ENCODE measurements at regions of chr7 and their contacts with region 1.

Region 1: GRCh38 chr7:27921081-27921836 is 181.3 kb downstream of the TAX1BP1 start:
- DNase-seq: peak; percentile 71
- ATAC-seq: peak; percentile 84
- H3K4me3 ChIP-seq: no peak overlapping the region
- H3K27ac ChIP-seq: no peak overlapping the region
- H3K4me1 ChIP-seq: peaks cover 6 to 34% of the 10 kb centered on the region in 2 experiments; a peak in 2 of 4 replicates
- H3K27me3 ChIP-seq: no peaks in the 10 kb centered on the region
- CTCF ChIP-seq: peak; percentile 46 to 76 (median 69); a peak in 4 of 6 replicates
- POLR2A ChIP-seq: no peak
- RAD21 ChIP-seq: peak; percentile 88

Region 2: GRCh38 chr7:26675143-26675887 is 1245.9 kb before region 1 on chr7:
- CTCF ChIA-PET with region 1: no interaction called
- POLR2A ChIA-PET with region 1: no interaction called
- RAD21 ChIA-PET with region 1: no interaction called
- intact Hi-C with region 1: loop called (anchors 10 kb)
- DNase-seq: no peak
- ATAC-seq: peak; percentile 67
- H3K4me3 ChIP-seq: no peak overlapping the region
- H3K27ac ChIP-seq: no peak overlapping the region
- H3K4me1 ChIP-seq: peaks cover 0 to 7% of the 10 kb centered on the region in 2 experiments; a peak in 1 of 4 replicates
- H3K27me3 ChIP-seq: no peaks in the 10 kb centered on the region
- CTCF ChIP-seq: no peak
- POLR2A ChIP-seq: no peak
- RAD21 ChIP-seq: no peak

Region 3: DNA sequence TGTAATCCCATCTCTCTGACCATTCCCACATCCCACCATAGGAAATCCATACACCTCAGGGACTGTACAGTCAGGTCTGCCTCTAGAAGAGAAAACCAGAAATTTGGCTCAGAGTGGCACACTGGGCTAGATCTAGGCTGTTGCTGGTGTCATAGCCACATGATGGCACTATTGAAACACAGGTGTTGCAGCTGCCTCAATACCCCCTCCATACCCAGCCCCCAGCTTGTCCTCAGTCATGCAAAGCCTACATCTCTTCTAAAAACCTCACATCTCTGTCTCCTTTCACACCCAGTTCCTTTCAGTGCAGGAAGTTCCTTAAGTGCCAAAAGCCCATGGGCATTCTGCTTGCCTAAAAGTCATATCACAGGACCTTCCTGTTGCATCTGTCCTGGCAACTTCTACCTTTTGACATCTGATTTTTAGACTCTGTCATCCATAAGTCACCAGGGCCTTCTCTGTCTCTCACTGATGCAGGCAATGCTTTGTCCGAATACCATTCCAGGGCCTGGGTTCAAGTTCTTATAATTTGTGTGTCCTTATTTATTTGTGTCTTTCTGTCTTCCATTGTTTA is 231.6 kb before region 1 on chr7:
- CTCF ChIA-PET with region 1: interaction called, 6 read pairs
- POLR2A ChIA-PET with region 1: no interaction called
- RAD21 ChIA-PET with region 1: no interaction called
- intact Hi-C with region 1: loop called (anchors 1 kb)
- DNase-seq: no peak
- ATAC-seq: peak; percentile 95
- H3K4me3 ChIP-seq: no peak overlapping the region
- H3K27ac ChIP-seq: no peak overlapping the region
- H3K4me1 ChIP-seq: peaks cover 0 to 13% of the 10 kb centered on the region in 2 experiments; a peak in 2 of 4 replicates
- H3K27me3 ChIP-seq: no peaks in the 10 kb centered on the region
- CTCF ChIP-seq: peak; percentile 53 to 69 (median 66)
- POLR2A ChIP-seq: no peak
- RAD21 ChIP-seq: peak; percentile 85

Region 4: DNA sequence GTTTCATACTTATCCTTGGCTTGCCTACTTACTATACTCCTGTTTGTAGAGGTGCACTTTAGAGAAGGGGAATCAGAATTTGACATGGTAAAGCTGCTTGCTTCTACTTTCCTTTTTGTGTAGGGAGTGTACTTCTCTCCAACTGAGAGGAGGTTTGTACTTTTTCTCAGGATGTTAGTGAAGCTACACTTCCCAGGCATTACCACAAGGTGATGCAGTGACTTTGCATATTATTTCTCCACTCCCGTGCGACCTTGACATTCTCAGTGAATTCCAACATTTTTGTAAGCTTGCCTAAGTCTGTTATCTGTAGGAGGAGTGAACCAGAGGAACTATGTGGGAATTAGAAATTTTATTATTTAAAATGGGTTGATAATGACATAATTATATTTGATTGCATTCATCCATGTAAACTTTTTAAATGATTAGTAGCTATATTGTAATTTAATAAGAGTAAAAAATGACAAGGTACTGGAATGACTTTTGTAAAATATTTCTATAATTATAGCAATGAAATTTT is 176.1 kb before region 1 on chr7:
- CTCF ChIA-PET with region 1: interaction called, 11 read pairs
- POLR2A ChIA-PET with region 1: no interaction called
- RAD21 ChIA-PET with region 1: no interaction called
- intact Hi-C with region 1: loop called (anchors 1 kb)
- DNase-seq: peak; percentile 48
- ATAC-seq: peak; percentile 55
- H3K4me3 ChIP-seq: no peak overlapping the region
- H3K27ac ChIP-seq: peak overlapping the region; percentile 46; the same call in 1 of the 2 replicates
- H3K4me1 ChIP-seq: peaks cover 13 to 20% of the 10 kb centered on the region in 2 experiments
- H3K27me3 ChIP-seq: no peaks in the 10 kb centered on the region
- CTCF ChIP-seq: peak; percentile 68 to 71 (median 68)
- POLR2A ChIP-seq: no peak
- RAD21 ChIP-seq: peak; percentile 76

Region 5: DNA sequence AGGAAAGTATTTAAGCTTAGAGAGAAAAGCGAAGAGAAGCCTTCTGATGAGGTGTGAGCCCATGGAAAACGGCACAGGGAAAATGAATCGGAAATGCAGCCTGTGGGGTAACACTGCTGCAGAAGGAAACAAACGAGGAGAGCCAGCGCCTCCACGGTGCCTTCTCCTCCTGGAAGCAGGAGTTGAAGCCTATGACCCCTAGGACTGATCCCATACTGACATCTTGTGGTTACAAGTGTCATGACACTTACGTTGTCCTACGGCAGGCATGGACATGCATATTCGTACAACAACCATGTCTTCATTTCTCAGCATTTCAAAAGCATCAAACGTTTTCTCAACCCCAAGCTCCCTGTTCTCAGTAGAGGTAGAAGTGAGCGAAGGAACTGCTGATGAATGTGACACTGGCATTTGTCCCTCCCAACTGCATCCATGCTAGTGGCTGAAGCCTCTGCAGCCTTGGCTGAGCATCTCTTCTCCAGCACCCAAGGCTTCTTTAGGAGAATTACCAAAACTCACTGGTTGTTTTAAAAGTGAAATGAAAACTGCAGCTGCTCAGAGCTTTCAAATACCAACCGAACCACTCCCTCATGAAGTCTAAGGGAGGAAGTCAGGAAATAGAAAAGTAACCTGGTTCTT is 99.2 kb after region 1 on chr7:
- CTCF ChIA-PET with region 1: no interaction called
- POLR2A ChIA-PET with region 1: no interaction called
- RAD21 ChIA-PET with region 1: no interaction called
- intact Hi-C with region 1: loop called (anchors 2 kb)
- DNase-seq: peak; percentile 64
- ATAC-seq: peak; percentile 98
- H3K4me3 ChIP-seq: no peak overlapping the region
- H3K27ac ChIP-seq: no peak overlapping the region
- H3K4me1 ChIP-seq: peaks cover 0 to 13% of the 10 kb centered on the region in 2 experiments; a peak in 1 of 4 replicates
- H3K27me3 ChIP-seq: no peaks in the 10 kb centered on the region
- CTCF ChIP-seq: peak; percentile 77 to 95 (median 86)
- POLR2A ChIP-seq: no peak
- RAD21 ChIP-seq: peak; percentile 98